GM12878 (cell line): ENCODE measurements at regions of chr11 and their contacts with region 1.

Region 1: DNA sequence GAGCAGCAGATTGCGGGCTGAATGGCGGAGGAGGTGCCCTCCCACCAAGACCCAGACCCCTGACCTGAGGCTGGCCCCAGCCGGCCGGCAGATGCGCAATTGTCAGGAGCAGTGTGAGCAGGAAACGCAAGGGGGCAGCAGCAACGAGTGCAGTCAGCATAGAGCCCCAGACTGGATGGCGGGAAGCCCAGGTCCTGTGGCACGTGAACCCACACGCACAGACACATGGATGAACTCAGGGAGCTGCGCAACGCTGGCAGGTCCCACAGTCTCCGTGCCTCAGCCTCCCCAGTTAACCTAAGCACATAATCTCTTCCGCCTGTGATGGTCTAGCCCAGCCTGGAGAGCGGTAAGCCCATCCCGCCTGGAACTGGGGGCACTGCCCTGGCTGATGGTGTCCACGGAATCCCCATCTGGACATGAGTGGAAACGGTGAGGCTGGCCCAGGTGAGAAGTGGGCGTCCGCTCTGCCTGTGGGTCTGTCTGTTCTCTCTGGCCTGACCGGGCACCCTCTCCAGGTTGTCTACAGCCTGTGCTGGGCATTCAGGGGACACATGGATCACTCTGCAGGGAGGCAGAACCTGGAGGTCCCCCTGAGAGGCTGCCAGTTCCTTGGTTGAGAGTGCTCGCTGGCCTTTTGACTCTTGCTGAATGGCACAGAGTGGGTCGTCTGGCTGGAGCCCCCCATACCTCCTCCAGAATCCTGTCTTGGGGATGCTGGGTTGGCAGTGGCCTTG is 626 bp upstream of the TBX10 start:
- DNase-seq: no peak
- ATAC-seq: peak; percentile 93
- H3K4me3 ChIP-seq: no peak overlapping the region
- H3K27ac ChIP-seq: no peak overlapping the region
- H3K4me1 ChIP-seq: peaks cover 13% of the 10 kb centered on the region
- H3K27me3 ChIP-seq: no peaks in the 10 kb centered on the region; a peak in 1 of 4 replicates
- CTCF ChIP-seq: peak; percentile 65 to 83 (median 75)
- EP300 ChIP-seq: no peak
- POLR2A ChIP-seq: no peak
- RAD21 ChIP-seq: peak; percentile 68

Region 2: GRCh38 chr11:67507864-67508485 is 132.2 kb before region 1 on chr11 and contains the start of gene CDK2AP2:
- CTCF ChIA-PET with region 1: no interaction called
- POLR2A ChIA-PET with region 1: no interaction called
- RAD21 ChIA-PET with region 1: no interaction called
- SMC1A ChIA-PET with region 1: no interaction called
- in situ Hi-C with region 1: no loop called
- intact Hi-C with region 1: no loop called
- DNase-seq: peak; percentile 99
- ATAC-seq: peak; percentile 86
- H3K4me3 ChIP-seq: peak within 1 kb of the TSS; percentile 82
- H3K27ac ChIP-seq: peak within 1 kb of the TSS; percentile 94
- H3K4me1 ChIP-seq: peaks cover 27% of the 10 kb centered on the region
- H3K27me3 ChIP-seq: no peaks in the 10 kb centered on the region; a peak in 1 of 4 replicates
- CTCF ChIP-seq: no peak
- EP300 ChIP-seq: no peak
- POLR2A ChIP-seq: peak; percentile 86
- RAD21 ChIP-seq: no peak
- polyA plus RNA-seq, gene CDK2AP2: 8.0 to 18.0 TPM

Region 3: DNA sequence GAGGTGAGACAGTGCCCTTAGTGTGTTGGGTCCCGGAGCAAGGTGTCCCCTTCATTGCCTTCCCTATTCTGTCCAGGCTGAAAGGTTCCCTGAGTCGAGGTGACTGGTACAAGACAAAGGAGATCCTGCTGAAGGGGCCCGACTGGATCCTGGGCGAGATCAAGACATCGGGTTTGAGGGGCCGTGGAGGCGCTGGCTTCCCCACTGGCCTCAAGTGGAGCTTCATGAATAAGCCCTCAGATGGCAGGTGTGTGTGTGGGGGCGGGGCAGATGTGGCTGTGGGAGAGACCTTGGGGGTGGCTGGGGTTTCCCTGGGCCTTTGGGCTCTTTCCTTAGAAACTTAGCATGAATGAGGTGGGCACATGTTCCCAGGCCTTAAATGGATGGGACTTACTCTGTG is 31.7 kb before region 1 on chr11:
- CTCF ChIA-PET with region 1: no interaction called
- POLR2A ChIA-PET with region 1: no interaction called
- RAD21 ChIA-PET with region 1: no interaction called
- SMC1A ChIA-PET with region 1: no interaction called
- in situ Hi-C with region 1: no loop called
- intact Hi-C with region 1: no loop called
- DNase-seq: no peak
- ATAC-seq: no peak
- H3K4me3 ChIP-seq: no peak overlapping the region
- H3K27ac ChIP-seq: no peak overlapping the region
- H3K4me1 ChIP-seq: peaks cover 16% of the 10 kb centered on the region
- H3K27me3 ChIP-seq: no peaks in the 10 kb centered on the region
- CTCF ChIP-seq: no peak
- EP300 ChIP-seq: no peak
- POLR2A ChIP-seq: no peak
- RAD21 ChIP-seq: no peak

Region 4: GRCh38 chr11:67691149-67691548 is 51.0 kb after region 1 on chr11:
- CTCF ChIA-PET with region 1: interaction called, 17 read pairs
- POLR2A ChIA-PET with region 1: no interaction called
- RAD21 ChIA-PET with region 1: no interaction called
- SMC1A ChIA-PET with region 1: no interaction called
- in situ Hi-C with region 1: no loop called
- intact Hi-C with region 1: no loop called
- DNase-seq: no peak
- ATAC-seq: 0 out of 3 replicates have a peak, but pooled peaks have one; percentile 36
- H3K4me3 ChIP-seq: no peak overlapping the region
- H3K27ac ChIP-seq: no peak overlapping the region
- H3K4me1 ChIP-seq: no peaks in the 10 kb centered on the region
- H3K27me3 ChIP-seq: peaks cover 1 to 3% of the 10 kb centered on the region in 2 experiments; a peak in 3 of 4 replicates
- CTCF ChIP-seq: peak; percentile 26 to 42 (median 39); a peak in 5 of 6 replicates
- EP300 ChIP-seq: no peak
- POLR2A ChIP-seq: no peak
- RAD21 ChIP-seq: peak; percentile 52